ENCODE measurements at regions of chr4 and their contacts with region 1.

Region 1: GRCh38 chr4:6640292-6641163 is at the start of gene MRFAP1:
- DNase-seq: peak; percentile 84 to 97 (median 95)
- ATAC-seq: peak; percentile 94
- H3K4me3 ChIP-seq: peak within 1 kb of the TSS; percentile 100
- H3K4me3 Mint-ChIP-seq: peak within 1 kb of the TSS; percentile 94 to 100 (median 99)
- H3K27ac ChIP-seq: peak within 1 kb of the TSS; percentile 97
- H3K27ac Mint-ChIP-seq: peak within 1 kb of the TSS; percentile 99 to 100 (median 99)
- H3K4me1 ChIP-seq: peaks cover 13 to 23% of the 10 kb centered on the region in 2 donors
- H3K4me1 Mint-ChIP-seq: peaks cover 26 to 52% (median 37%) of the 10 kb centered on the region in 7 donors
- H3K27me3 ChIP-seq: no peaks in the 10 kb centered on the region
- H3K27me3 Mint-ChIP-seq: no peaks in the 10 kb centered on the region
- total RNA-seq, gene MRFAP1: 120 to 187 (median 139) TPM

Region 2: GRCh38 chr4:6574747-6575502 is 65.6 kb before region 1 on chr4 and contains the start of gene MAN2B2:
- CTCF ChIA-PET with region 1: no interaction called
- POLR2A ChIA-PET with region 1: interaction called, 19 read pairs
- intact Hi-C with region 1: loop called (anchors 1 kb)
- DNase-seq: peak; percentile 68 to 92 (median 75)
- ATAC-seq: peak; percentile 96
- H3K4me3 ChIP-seq: peak within 1 kb of the TSS; percentile 92
- H3K4me3 Mint-ChIP-seq: peak within 1 kb of the TSS; percentile 84 to 94 (median 90)
- H3K27ac ChIP-seq: peak within 1 kb of the TSS; percentile 83
- H3K27ac Mint-ChIP-seq: peak within 1 kb of the TSS; percentile 68 to 91 (median 84)
- H3K4me1 ChIP-seq: peaks cover 5 to 9% of the 10 kb centered on the region in 2 donors
- H3K4me1 Mint-ChIP-seq: peaks cover 6 to 13% (median 8%) of the 10 kb centered on the region in 7 donors
- H3K27me3 ChIP-seq: no peaks in the 10 kb centered on the region
- H3K27me3 Mint-ChIP-seq: peaks cover 0 to 17% (median 0%) of the 10 kb centered on the region in 5 donors
- total RNA-seq, gene MAN2B2: 28.7 to 56.2 (median 39.4) TPM

Region 3: DNA sequence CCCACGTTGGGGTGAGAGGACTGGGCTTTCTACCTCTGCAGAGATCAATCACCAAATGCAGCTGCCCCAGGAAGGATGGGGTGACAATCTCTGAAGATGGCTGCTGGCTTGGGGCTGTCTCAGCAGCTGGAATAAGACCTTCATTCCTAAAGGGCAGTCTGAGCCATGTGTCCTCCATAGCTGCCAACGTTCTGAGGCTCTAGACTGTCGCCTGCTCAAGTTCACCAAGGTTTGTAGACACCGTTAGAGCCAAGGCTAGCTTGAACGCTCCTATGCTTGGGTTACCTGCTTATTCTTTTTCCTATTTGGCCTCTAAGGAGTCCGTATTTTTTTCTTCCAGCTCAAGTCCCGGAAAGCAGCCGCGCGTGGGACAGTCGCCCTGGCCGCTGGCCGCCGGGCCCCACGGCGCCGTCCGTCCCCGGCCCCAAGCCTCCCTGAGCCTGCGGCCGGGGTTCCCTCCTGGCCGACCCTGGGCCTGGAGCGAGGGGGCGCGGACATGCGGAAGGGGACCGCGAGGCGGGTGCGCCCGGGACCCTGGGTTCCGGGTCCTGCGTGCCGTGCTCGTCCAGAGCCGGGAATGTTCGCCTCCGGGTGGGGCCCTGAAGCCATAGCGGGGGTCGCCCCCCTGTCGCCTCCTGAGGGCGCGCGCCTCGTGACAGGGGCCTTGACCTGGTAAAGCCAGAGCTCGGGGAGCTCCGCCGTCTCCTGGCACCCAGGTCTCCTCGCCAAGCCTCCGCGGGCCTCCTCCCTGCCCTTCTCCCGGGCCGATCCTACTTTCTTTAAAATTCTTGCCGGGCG is 23.3 kb after region 1 on chr4:
- CTCF ChIA-PET with region 1: interaction called, 3 read pairs
- POLR2A ChIA-PET with region 1: interaction called, 90 read pairs
- intact Hi-C with region 1: loop called in 1 of 2 experiments (anchors 1 kb)
- DNase-seq: no peak
- ATAC-seq: no peak
- H3K4me3 ChIP-seq: peak overlapping the region; percentile 35
- H3K4me3 Mint-ChIP-seq: peak overlapping the region in 7 of 10 donors; percentile 12 to 81 (median 38)
- H3K27ac ChIP-seq: no peak overlapping the region
- H3K27ac Mint-ChIP-seq: peak overlapping the region in 1 of 9 donors; percentile 55
- H3K4me1 ChIP-seq: peaks cover 4 to 12% of the 10 kb centered on the region in 2 donors
- H3K4me1 Mint-ChIP-seq: peaks cover 0 to 9% (median 5%) of the 10 kb centered on the region in 7 donors
- H3K27me3 ChIP-seq: peaks cover 0 to 2% of the 10 kb centered on the region in 2 donors
- H3K27me3 Mint-ChIP-seq: peaks cover 0 to 49% (median 0%) of the 10 kb centered on the region in 5 donors

Region 4: DNA sequence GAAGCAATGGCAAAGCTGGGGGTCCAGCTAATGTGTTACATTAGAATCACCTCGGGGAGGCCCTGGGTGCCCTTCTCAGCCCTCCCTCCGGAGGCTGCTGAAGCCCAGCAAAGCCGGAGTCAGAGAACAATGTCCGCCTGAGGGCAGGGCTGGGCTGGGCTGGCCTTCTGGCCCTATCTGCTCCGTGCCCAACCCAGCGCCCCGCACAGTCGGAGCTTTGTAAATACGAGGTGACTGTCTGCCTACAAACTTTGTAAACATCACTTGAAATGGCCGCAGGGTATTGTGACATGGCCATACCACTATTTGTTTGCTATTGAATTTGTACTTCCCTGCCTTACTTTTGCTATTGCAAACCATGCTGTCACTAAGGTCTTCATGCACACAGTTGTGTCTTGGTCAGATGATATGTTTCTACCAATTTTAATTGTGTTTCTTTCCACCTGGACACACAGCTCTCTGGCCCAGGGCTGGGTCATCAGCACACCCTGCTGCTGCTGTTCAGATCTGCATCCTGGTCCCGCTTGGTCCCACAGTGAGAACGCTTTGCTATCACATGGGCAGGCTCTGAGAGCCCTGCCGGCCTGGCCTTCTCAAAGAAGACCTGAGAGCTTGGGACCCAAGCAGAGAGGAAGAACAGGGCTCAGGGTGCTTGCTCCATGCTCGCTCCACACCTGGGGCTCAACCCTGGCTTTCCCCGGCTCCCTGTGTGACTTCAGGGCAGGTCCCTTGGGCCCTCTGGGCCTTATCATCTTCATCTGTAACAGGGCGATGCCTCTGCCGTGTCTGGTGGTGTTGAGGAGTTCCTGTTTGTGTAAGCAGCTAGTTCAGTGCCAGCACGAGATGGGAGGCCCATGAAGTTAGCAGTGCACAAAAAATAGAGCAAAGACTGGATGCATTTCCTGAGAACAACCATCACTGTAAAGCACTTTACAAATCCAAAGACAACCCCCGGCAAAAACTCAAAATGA is 55.4 kb after region 1 on chr4:
- CTCF ChIA-PET with region 1: no interaction called
- POLR2A ChIA-PET with region 1: interaction called, 26 read pairs
- intact Hi-C with region 1: loop called in 1 of 2 experiments (anchors 1 kb)
- DNase-seq: peak in 8 of 9 donors; percentile 53 to 82 (median 75)
- ATAC-seq: peak; percentile 89
- H3K4me3 ChIP-seq: peak overlapping the region; percentile 17
- H3K4me3 Mint-ChIP-seq: peak overlapping the region; percentile 42 to 84 (median 74)
- H3K27ac ChIP-seq: peak overlapping the region; percentile 77
- H3K27ac Mint-ChIP-seq: peak overlapping the region; percentile 93 to 99 (median 97)
- H3K4me1 ChIP-seq: peaks cover 84 to 85% of the 10 kb centered on the region in 2 donors
- H3K4me1 Mint-ChIP-seq: peaks cover 59 to 89% (median 82%) of the 10 kb centered on the region in 7 donors
- H3K27me3 ChIP-seq: no peaks in the 10 kb centered on the region
- H3K27me3 Mint-ChIP-seq: no peaks in the 10 kb centered on the region

Region 5: GRCh38 chr4:6909073-6909965 is 268.8 kb after region 1 on chr4 and contains the start of gene TBC1D14:
- CTCF ChIA-PET with region 1: no interaction called
- POLR2A ChIA-PET with region 1: interaction called, 12 read pairs
- intact Hi-C with region 1: loop called in 1 of 2 experiments (anchors 1 kb)
- DNase-seq: peak; percentile 84 to 93 (median 90)
- ATAC-seq: peak; percentile 94
- H3K4me3 ChIP-seq: peak within 1 kb of the TSS; percentile 70
- H3K4me3 Mint-ChIP-seq: peak within 1 kb of the TSS; percentile 89 to 95 (median 91)
- H3K27ac ChIP-seq: peak within 1 kb of the TSS; percentile 97
- H3K27ac Mint-ChIP-seq: peak within 1 kb of the TSS; percentile 81 to 94 (median 91)
- H3K4me1 ChIP-seq: peaks cover 20 to 38% of the 10 kb centered on the region in 2 donors
- H3K4me1 Mint-ChIP-seq: peaks cover 45 to 60% (median 55%) of the 10 kb centered on the region in 7 donors
- H3K27me3 ChIP-seq: no peaks in the 10 kb centered on the region
- H3K27me3 Mint-ChIP-seq: peaks cover 0 to 2% (median 0%) of the 10 kb centered on the region in 5 donors
- total RNA-seq, gene TBC1D14: 42.9 to 72.2 (median 58.3) TPM

Region 6: GRCh38 chr4:8158710-8159536 is 1518.4 kb after region 1 on chr4 and contains the start of gene ABLIM2:
- CTCF ChIA-PET with region 1: no interaction called
- POLR2A ChIA-PET with region 1: no interaction called
- intact Hi-C with region 1: loop called in 1 of 2 experiments (anchors 5 kb)
- DNase-seq: peak; percentile 96 to 100 (median 100)
- ATAC-seq: peak; percentile 100
- H3K4me3 ChIP-seq: peak within 1 kb of the TSS; percentile 95
- H3K4me3 Mint-ChIP-seq: peak within 1 kb of the TSS; percentile 92 to 100 (median 97)
- H3K27ac ChIP-seq: peak within 1 kb of the TSS; percentile 77
- H3K27ac Mint-ChIP-seq: peak within 1 kb of the TSS; percentile 84 to 96 (median 91)
- H3K4me1 ChIP-seq: peaks cover 10 to 13% of the 10 kb centered on the region in 2 donors
- H3K4me1 Mint-ChIP-seq: peaks cover 7 to 25% (median 18%) of the 10 kb centered on the region in 7 donors
- H3K27me3 ChIP-seq: no peaks in the 10 kb centered on the region
- H3K27me3 Mint-ChIP-seq: peaks cover 0 to 31% (median 4%) of the 10 kb centered on the region in 5 donors
- total RNA-seq, gene ABLIM2: 0.22 to 4.9 (median 3.1) TPM